SK-N-SH (cell line): ENCODE measurements at regions of chr9 and their contacts with region 1.

Region 1: DNA sequence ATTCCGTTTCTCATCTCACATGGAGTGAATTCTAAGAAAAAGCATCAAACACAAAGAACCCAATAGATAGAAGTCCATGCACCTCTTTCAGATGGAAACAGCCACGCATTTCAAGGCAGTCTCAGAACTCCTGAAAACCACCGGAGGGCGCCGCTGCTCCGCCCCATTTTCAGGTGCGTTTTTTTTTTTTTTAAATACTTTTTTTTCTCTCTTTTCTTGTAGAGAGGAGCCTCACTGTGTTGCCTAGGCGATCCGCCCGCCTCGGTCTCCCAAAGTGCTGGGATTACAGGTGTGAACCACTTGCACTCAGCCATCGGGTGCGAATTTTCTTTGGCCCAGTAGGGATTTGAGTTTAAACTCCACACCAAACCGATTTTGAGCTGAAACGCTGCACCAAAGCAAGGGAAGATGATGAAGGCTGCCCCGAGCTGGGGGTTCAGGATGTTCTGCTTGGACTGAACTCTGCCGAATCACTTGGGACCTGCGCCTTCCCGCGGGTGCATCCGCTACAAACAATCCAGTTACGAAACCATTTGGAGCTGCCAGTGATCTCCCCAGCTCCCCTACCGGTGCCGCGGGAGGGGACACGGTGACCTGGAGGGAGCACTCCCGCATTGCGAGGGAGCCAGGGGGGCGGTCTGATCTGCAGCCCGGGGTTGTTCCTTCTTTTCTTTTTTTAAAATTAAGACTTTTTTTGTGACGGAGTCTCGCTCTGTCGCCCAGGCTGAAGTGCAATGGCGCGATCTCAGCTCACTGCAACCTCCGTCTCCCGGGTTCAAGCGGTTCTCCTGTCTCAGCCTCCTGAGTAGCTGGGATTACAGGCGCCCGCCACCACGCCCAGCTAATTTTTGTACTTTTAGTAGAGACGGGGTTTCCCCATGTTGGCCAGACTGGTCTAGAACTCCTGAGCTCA is 1.4 kb downstream of the PTGR1 start:
- DNase-seq: peak; percentile 66
- H3K4me3 ChIP-seq: peak overlapping the region; percentile 54 to 75
- H3K27ac ChIP-seq: peak overlapping the region in 1 of 2 experiments; percentile 53; a peak in 2 of 4 replicates
- H3K4me1 ChIP-seq: no peaks in the 10 kb centered on the region; a peak in 1 of 4 replicates
- H3K27me3 ChIP-seq: no peaks in the 10 kb centered on the region
- CTCF ChIP-seq: peak; percentile 77
- EP300 ChIP-seq: no peak
- RAD21 ChIP-seq: peak; percentile 80

Region 2: GRCh38 chr9:111613441-111614039 is 15.5 kb after region 1 on chr9:
- CTCF ChIA-PET with region 1: interaction called, 18 read pairs
- POLR2A ChIA-PET with region 1: no interaction called
- DNase-seq: no peak
- H3K4me3 ChIP-seq: no peak overlapping the region
- H3K27ac ChIP-seq: no peak overlapping the region
- H3K4me1 ChIP-seq: no peaks in the 10 kb centered on the region
- H3K27me3 ChIP-seq: no peaks in the 10 kb centered on the region
- CTCF ChIP-seq: no peak
- EP300 ChIP-seq: no peak
- RAD21 ChIP-seq: no peak

Region 3: GRCh38 chr9:111621895-111622480 is 23.9 kb after region 1 on chr9:
- CTCF ChIA-PET with region 1: interaction called, 44 read pairs
- POLR2A ChIA-PET with region 1: no interaction called
- DNase-seq: peak; percentile 64
- H3K4me3 ChIP-seq: peak overlapping the region in 1 of 2 experiments; percentile 42; a peak in 1 of 4 replicates
- H3K27ac ChIP-seq: no peak overlapping the region
- H3K4me1 ChIP-seq: no peaks in the 10 kb centered on the region
- H3K27me3 ChIP-seq: no peaks in the 10 kb centered on the region
- CTCF ChIP-seq: peak; percentile 81
- EP300 ChIP-seq: no peak
- RAD21 ChIP-seq: peak; percentile 77

Region 4: GRCh38 chr9:111631071-111631971 is 33.2 kb after region 1 on chr9 and contains the start of gene DNAJC25:
- CTCF ChIA-PET with region 1: interaction called, 10 read pairs
- POLR2A ChIA-PET with region 1: no interaction called
- DNase-seq: peak; percentile 99
- H3K4me3 ChIP-seq: peak within 1 kb of the TSS; percentile 90 to 97
- H3K27ac ChIP-seq: peak within 1 kb of the TSS; percentile 60 to 79; a peak in 3 of 4 replicates
- H3K4me1 ChIP-seq: peaks cover 10 to 21% of the 10 kb centered on the region in 2 experiments; a peak in 3 of 4 replicates
- H3K27me3 ChIP-seq: no peaks in the 10 kb centered on the region
- CTCF ChIP-seq: no peak
- EP300 ChIP-seq: 0 out of 4 replicates have a peak, but pooled peaks of 1 of the 2 experiments have one; percentile 21
- RAD21 ChIP-seq: no peak; the same call in 1 of the 2 replicates
- polyA plus RNA-seq, gene DNAJC25: 3.3 and 4.4 TPM in 2 replicates

Region 5: DNA sequence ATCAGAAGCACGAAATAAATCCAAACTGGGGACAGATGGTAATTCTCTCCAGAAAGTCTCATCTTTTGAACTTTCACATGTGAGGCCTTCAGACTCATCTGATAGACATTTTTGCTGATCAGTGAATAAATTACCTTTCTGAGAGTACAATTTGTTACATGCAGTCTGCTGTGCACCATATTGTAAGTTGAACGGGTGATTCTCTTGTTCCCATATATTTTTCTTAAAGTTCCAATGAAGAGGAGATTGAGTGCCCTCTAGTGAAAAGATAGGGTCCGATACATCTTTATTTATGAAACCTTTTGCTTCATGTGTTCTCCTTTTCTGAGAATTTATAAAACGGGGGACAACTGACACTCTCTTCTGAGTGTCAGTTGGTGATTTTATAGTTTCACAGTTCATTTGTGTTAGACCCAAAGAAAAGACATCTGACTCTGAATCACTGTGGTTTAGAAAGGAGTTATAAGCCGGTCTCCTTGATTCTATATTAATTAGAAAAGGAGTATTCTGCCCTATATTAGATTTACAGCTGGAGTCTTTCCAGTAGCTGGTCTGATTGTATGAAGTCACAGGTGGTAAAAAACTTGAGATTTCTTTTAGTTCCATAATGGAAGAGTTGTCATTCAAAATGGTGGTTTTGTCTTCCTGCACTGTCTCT is 93.7 kb after region 1 on chr9:
- CTCF ChIA-PET with region 1: interaction called, 49 read pairs
- POLR2A ChIA-PET with region 1: no interaction called
- DNase-seq: peak; percentile 39
- H3K4me3 ChIP-seq: no peak overlapping the region
- H3K27ac ChIP-seq: no peak overlapping the region
- H3K4me1 ChIP-seq: no peaks in the 10 kb centered on the region; a peak in 2 of 4 replicates
- H3K27me3 ChIP-seq: no peaks in the 10 kb centered on the region
- CTCF ChIP-seq: peak; percentile 60
- EP300 ChIP-seq: no peak
- RAD21 ChIP-seq: peak; percentile 73